ENCODE measurements at regions of chr12 and their contacts with region 1.

Region 1: DNA sequence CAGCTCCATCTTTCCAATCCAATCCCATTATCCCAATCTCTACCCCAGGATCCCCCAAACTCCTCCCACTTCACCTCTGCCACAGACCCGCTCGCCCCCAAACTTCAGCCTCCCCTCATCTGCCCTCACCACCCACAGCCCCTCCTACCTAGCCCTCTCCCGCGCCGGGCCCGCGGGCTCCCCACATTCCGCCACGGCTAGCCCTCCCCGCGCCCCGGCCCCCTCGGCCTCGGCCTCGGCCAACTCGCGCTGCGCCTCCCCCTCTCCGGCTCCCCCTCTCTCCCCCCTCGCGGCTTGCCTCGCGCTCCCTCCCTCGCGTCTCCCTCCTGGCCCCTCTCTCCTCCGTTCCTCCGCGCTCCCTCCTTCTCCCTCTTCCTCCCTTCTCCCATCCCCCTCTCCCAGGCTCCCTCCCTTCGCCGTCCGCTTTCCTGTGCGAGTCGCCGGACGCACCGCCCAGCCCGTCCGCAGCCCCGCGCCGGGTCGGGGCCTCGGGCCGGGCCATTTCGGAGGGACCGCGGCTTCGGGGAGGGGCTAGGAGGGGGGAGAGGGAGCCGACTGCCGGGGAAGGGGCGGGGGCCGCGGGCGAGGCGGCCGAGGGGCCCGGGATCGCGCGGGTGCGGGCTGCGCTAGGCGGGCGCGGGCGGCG is at the start of gene ATN1:
- DNase-seq: peak; percentile 37 to 65 (median 45)
- H3K4me3 ChIP-seq: peak within 1 kb of the TSS; percentile 57 to 65
- H3K4me3 Mint-ChIP-seq: peak within 1 kb of the TSS; percentile 88 to 94 (median 90)
- H3K27ac ChIP-seq: peak within 1 kb of the TSS; percentile 67
- H3K27ac Mint-ChIP-seq: peak within 1 kb of the TSS; percentile 91 to 97 (median 94)
- H3K4me1 ChIP-seq: peaks cover 43% of the 10 kb centered on the region
- H3K4me1 Mint-ChIP-seq: peaks cover 31 to 57% (median 43%) of the 10 kb centered on the region in 4 donors
- H3K27me3 ChIP-seq: no peaks in the 10 kb centered on the region
- H3K27me3 Mint-ChIP-seq: no peaks in the 10 kb centered on the region
- total RNA-seq, gene ATN1: 32.2 to 33.0 TPM

Region 2: DNA sequence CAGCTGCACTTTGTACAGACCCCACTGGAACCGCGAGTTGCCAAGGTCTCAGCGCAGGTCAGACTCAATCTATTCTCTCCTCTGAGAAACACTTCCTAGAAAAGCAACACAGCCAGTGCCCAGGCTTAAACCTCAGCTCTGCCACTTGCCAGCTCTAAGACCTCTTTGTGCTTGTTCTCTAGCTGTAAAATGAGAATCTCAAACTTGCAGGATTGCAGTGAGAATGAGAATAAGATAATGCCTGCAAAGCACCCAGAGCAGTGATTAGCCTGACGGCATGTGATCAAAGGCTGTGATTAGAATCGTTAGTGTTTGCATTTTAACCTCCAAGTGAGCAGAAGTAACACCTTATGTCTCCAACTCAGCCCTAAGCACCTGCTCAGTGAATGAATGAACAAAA is 1003.8 kb before region 1 on chr12:
- CTCF ChIA-PET with region 1: no interaction called
- POLR2A ChIA-PET with region 1: no interaction called
- intact Hi-C with region 1: no loop called
- DNase-seq: no peak
- H3K4me3 ChIP-seq: no peak overlapping the region
- H3K4me3 Mint-ChIP-seq: no peak overlapping the region
- H3K27ac ChIP-seq: no peak overlapping the region
- H3K27ac Mint-ChIP-seq: no peak overlapping the region
- H3K4me1 ChIP-seq: no peaks in the 10 kb centered on the region
- H3K4me1 Mint-ChIP-seq: no peaks in the 10 kb centered on the region
- H3K27me3 ChIP-seq: no peaks in the 10 kb centered on the region
- H3K27me3 Mint-ChIP-seq: peaks cover 22 to 25% of the 10 kb centered on the region in 2 donors

Region 3: DNA sequence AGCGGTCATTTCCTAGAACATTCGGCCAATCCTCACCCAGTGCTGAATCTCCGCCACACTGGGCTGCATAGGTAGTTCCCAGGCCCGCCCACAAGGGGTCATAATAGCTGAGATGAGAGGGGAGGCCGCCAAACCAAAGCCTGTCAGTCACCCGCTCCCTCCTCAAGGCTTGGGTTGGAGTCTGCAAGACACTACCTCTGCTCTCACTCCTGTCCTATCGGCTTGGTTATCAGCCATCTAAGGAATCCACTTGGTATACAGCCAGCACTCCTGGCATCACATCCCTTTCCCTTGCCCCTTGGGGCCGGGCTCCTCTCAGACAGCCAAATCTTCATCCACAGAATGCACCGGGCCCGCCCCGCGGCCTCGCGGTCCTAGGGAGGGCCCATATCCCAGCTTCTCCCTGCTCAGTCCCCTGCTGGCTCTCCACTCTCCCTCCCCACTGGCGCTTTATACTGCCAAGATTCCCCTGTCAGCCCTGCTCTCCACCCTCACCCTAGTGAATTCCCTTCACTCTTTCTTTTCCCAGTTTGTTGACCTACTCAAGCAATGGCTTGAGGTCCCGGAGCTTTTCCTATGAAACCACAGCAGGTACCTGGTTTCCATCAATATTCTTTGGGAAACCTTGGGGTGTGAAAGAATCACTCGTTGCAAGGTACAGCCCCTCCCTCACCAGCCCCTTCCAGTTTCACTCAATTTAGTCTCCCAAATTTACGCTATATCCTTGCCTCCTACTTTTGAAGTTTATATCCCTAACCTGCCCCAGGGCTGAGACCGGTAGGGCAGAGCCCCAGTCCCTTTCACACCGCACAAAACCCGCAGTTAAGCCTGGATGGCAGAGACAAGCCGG is 373.1 kb before region 1 on chr12:
- CTCF ChIA-PET with region 1: no interaction called
- POLR2A ChIA-PET with region 1: no interaction called
- intact Hi-C with region 1: no loop called
- DNase-seq: peak; percentile 60 to 79 (median 63)
- H3K4me3 ChIP-seq: peak overlapping the region; percentile 71 to 73
- H3K4me3 Mint-ChIP-seq: peak overlapping the region; percentile 81 to 96 (median 88)
- H3K27ac ChIP-seq: peak overlapping the region; percentile 48
- H3K27ac Mint-ChIP-seq: peak overlapping the region; percentile 14 to 89 (median 70)
- H3K4me1 ChIP-seq: peaks cover 57% of the 10 kb centered on the region
- H3K4me1 Mint-ChIP-seq: peaks cover 28 to 64% (median 45%) of the 10 kb centered on the region in 4 donors
- H3K27me3 ChIP-seq: no peaks in the 10 kb centered on the region
- H3K27me3 Mint-ChIP-seq: no peaks in the 10 kb centered on the region

Region 4: DNA sequence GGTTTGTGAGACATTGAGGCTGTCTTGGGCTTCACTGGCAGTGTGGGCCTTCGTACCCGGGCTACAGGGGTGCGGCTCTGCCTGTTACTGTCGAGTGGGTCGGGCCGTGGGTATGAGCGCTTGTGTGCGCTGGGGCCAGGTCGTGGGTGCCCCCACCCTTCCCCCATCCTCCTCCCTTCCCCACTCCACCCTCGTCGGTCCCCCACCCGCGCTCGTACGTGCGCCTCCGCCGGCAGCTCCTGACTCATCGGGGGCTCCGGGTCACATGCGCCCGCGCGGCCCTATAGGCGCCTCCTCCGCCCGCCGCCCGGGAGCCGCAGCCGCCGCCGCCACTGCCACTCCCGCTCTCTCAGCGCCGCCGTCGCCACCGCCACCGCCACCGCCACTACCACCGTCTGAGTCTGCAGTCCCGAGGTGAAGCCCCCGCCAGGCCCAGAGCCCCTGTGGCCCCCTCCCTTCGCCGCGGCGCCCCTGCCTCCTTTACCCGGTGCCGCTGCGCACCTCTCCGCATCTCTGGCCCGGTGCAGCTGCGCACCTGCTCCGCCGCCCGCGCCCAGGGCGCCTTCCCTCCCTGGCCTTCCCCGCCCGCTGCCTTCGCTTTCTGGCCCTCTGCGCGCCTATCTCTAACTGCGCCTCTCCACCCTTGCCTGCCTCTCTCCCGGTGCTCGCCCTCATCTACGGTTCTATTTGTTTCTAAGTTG is 13.1 kb before region 1 on chr12 and contains the start of gene ENO2:
- CTCF ChIA-PET with region 1: interaction called, 44 read pairs
- POLR2A ChIA-PET with region 1: interaction called, 58 read pairs
- intact Hi-C with region 1: loop called (anchors 1 kb)
- DNase-seq: peak; percentile 83 to 93 (median 85)
- H3K4me3 ChIP-seq: peak within 1 kb of the TSS; percentile 69 to 76
- H3K4me3 Mint-ChIP-seq: peak within 1 kb of the TSS; percentile 90 to 98 (median 96)
- H3K27ac ChIP-seq: peak within 1 kb of the TSS; percentile 77
- H3K27ac Mint-ChIP-seq: peak within 1 kb of the TSS; percentile 88 to 98 (median 96)
- H3K4me1 ChIP-seq: peaks cover 29% of the 10 kb centered on the region
- H3K4me1 Mint-ChIP-seq: peaks cover 12 to 44% (median 27%) of the 10 kb centered on the region in 4 donors
- H3K27me3 ChIP-seq: no peaks in the 10 kb centered on the region
- H3K27me3 Mint-ChIP-seq: no peaks in the 10 kb centered on the region
- total RNA-seq, gene ENO2: 187 to 190 TPM

Measured in CD4-positive, alpha-beta memory T cell (primary cell).